Activated CD8-positive, alpha-beta memory T cell treated with anti-CD3 and anti-CD28 coated beads, Interleukin-2, amount 10 ng/mL, durations not matched to agents 7 days and 5 days (primary cell): ENCODE measurements at regions of chr7 and their contacts with region 1.

Region 1: DNA sequence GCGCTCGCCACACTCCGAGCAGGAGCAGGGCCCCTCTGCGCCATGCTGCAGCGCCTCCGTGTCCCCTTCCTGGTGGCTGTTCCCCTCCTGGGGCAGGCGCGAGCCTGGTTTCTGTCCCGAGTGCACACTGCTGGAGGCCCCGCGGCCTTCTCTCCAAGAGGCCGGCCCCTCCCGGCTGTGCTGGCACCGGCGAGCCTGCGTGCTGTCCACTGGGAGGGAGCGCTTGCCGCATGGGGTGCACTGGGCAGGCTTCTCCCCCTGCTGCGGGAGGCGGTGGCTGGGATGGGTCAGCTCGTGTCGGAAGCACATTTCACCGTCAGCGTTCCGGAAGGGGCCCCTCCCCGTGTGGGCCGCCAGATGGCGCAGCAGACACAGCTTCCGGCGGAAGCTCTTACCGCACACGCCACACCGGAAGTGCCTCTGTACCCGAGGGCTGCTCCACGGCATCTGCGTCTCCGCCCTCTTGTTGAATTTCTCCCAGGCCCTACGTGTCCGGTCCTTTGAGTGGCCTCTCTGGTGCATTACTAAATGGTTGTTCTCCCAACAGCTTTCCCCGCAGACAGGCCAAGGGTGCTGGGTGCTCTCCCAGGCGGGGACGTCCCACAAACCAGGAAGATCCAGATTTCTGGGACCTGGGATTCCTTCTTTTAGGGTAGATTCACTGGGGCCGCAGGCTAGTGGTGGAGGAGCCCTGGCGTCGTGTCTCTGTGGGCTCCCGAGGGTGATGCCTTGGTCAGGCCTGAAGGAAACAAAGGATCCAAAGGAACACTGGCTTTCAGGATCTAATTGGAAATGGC is 18.7 kb downstream of the ZNF786 start:
- DNase-seq: peak; percentile 62
- ATAC-seq: peak; percentile 74
- H3K4me3 Mint-ChIP-seq: no peak overlapping the region
- H3K27ac Mint-ChIP-seq: peak overlapping the region; percentile 74
- H3K4me1 Mint-ChIP-seq: peaks cover 11% of the 10 kb centered on the region
- H3K27me3 Mint-ChIP-seq: no peaks in the 10 kb centered on the region

Region 2: DNA sequence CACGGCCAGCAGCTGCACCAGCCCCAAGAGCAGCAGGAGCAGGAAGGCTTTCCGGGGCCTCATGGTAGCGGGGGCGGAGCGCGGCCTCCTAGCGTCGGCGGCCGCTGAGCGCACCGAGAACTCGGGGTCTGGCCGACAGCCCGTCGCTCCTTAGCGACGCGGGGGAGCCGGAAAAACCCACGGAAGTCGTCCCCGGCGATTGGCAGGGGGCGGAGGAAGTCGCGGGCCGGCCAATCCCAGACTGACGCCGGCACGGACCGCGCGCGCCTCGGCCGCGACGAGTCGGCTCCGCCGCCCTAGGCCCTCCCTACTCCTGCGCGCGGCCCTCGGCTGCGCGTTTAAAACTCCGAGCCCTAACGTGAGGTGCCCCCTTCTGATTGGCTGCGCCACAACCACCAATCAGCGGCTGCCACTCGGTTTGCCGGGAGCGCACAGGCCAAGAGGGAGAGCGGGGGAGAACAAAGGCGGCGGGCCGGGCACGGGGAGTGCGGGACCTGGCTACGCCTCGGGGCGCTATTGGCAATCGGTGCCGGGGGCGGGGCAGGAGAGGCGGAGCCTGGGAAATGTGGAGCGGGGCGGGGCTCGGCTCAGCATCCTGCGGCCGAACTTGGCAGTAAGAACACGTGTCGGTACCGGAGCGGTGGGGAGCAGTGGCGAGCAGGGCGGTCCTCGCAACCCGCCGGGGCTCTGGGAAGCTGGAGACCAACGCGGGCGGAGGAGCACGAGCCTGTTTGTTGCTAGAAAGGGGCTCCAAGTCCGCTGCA is 43.3 kb before region 1 on chr7 and contains the start of gene PDIA4:
- CTCF ChIA-PET with region 1: interaction called, 48 read pairs
- DNase-seq: peak; percentile 100
- ATAC-seq: peak; percentile 93
- H3K4me3 Mint-ChIP-seq: peak within 1 kb of the TSS; percentile 94
- H3K27ac Mint-ChIP-seq: peak within 1 kb of the TSS; percentile 90
- H3K4me1 Mint-ChIP-seq: peaks cover 34% of the 10 kb centered on the region
- H3K27me3 Mint-ChIP-seq: peaks cover 3% of the 10 kb centered on the region
- total RNA-seq, gene PDIA4: 82.3 to 99.4 TPM

Region 3: DNA sequence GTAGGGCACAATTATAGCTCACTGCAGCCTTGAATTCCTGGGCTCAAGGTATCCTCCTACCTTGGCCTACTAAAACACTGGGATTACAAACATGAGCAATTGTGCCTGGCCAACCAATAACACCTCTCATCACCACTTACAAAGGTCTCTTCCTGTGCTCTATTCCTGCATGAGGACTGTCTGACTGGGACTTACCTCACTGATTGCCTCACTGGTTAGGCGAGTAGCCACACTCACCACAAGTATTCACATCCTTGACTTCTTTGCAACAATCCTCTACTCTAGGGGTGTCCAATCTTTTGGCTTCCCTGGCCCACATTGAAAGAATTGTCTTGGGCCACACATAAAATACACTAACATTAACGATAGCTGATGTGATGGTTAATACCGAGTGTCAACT is 20.9 kb before region 1 on chr7:
- CTCF ChIA-PET with region 1: interaction called, 17 read pairs
- DNase-seq: no peak
- ATAC-seq: no peak
- H3K4me3 Mint-ChIP-seq: no peak overlapping the region
- H3K27ac Mint-ChIP-seq: no peak overlapping the region
- H3K4me1 Mint-ChIP-seq: peaks cover 3% of the 10 kb centered on the region
- H3K27me3 Mint-ChIP-seq: peaks cover 5% of the 10 kb centered on the region

Region 4: GRCh38 chr7:149090397-149091195 is 18.8 kb after region 1 on chr7 and contains the start of gene ZNF786:
- CTCF ChIA-PET with region 1: no interaction called
- DNase-seq: peak; percentile 93
- ATAC-seq: peak; percentile 89
- H3K4me3 Mint-ChIP-seq: peak within 1 kb of the TSS; percentile 88
- H3K27ac Mint-ChIP-seq: peak within 1 kb of the TSS; percentile 99
- H3K4me1 Mint-ChIP-seq: peaks cover 11% of the 10 kb centered on the region
- H3K27me3 Mint-ChIP-seq: no peaks in the 10 kb centered on the region
- total RNA-seq, gene ZNF786: 7.1 to 7.4 TPM